ENCODE measurements at regions of chr6 and their contacts with region 1.

Region 1: DNA sequence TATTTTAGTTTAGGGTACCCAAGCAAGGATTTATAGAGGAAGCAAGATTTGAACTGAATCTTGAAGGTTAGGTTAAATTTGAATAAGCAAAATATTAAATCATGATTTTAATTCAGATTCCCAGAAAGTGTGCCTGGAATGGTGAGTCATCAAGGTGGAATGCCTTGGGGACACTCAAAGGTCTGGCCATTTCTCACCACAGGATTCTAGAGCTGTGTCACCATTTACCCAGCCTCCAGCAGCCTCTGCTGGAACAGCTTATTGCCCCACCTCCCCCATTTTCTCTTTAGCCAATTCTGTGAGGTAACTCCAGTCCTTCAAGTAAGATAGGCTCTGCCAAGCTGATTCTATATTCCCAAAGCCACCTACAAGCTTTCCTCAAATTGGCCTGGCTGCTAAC is 181.4 kb downstream of the SIM1 start:
- DNase-seq: peak; percentile 77
- H3K4me3 Mint-ChIP-seq: no peak overlapping the region
- H3K27ac Mint-ChIP-seq: peak overlapping the region; percentile 39
- H3K4me1 Mint-ChIP-seq: peaks cover 26% of the 10 kb centered on the region
- H3K27me3 Mint-ChIP-seq: no peaks in the 10 kb centered on the region
- CTCF ChIP-seq: no peak

Region 2: GRCh38 chr6:100235631-100236030 is 47.7 kb before region 1 on chr6:
- CTCF ChIA-PET with region 1: no interaction called
- intact Hi-C with region 1: loop called (anchors 1 kb)
- DNase-seq: no peak
- H3K4me3 Mint-ChIP-seq: no peak overlapping the region
- H3K27ac Mint-ChIP-seq: no peak overlapping the region
- H3K4me1 Mint-ChIP-seq: peaks cover 21% of the 10 kb centered on the region
- H3K27me3 Mint-ChIP-seq: no peaks in the 10 kb centered on the region
- CTCF ChIP-seq: no peak

Region 3: DNA sequence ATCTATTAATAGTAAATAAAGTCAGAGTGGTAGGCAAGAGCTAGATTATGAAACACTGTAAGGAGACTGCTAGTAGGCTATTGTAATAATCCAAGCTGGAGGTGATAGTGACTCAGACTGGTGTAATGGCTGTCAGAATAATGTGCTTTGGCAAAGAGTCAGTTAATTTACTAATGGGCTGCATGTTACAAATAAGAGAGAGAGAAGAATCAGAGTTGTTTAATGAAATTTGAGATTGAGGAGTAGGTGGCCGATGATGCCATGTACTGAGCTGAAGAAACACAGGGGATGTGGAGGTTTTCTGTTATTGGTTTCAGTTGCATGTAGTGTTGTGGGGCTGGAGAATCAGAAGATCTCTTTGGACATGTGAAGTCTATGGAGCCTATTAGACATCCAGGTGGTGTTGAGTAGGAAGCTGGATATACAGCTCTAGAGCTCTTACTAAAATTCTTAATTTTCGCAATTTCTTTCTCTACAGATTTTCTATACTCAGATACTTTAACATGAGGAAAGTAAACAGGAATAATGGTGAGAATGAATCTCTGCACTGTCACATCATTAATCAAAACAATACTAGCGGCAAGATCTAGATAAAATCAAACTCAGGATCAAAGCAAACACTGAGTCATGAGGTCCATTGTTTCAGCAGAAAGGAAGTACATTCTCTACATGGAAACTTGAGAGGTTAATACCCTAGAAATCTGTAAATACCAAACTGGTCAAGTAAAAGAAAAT is 13.7 kb after region 1 on chr6:
- CTCF ChIA-PET with region 1: interaction called, 12 read pairs
- intact Hi-C with region 1: no loop called
- DNase-seq: peak; percentile 16
- H3K4me3 Mint-ChIP-seq: peak overlapping the region; percentile 35
- H3K27ac Mint-ChIP-seq: peak overlapping the region; percentile 91
- H3K4me1 Mint-ChIP-seq: peaks cover 31% of the 10 kb centered on the region
- H3K27me3 Mint-ChIP-seq: no peaks in the 10 kb centered on the region
- CTCF ChIP-seq: no peak